ENCODE measurements at regions of chr15 and their contacts with region 1.

Region 1: DNA sequence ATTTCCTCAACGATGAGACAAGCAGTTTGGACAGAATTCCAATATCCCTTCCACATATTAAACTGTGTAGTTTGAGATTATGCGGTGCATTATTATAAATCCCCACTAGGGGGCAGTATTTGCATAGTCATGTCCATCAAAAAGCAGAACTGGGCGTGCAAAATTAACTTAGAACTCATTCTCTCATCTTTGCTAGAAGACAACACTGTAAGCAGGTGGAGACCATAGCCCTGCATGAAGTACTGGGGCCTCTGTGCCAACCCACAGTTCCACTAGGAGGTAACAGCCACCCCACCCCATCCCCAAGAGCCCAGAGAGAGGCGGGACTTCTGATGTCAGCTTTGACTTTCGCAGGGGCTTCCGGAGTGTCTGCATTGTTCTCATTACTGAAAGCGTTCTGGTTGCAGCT is 106.6 kb upstream of the TMC3 start:
- DNase-seq: no peak
- ATAC-seq: peak; percentile 42
- H3K4me3 Mint-ChIP-seq: no peak overlapping the region
- H3K27ac Mint-ChIP-seq: no peak overlapping the region
- H3K4me1 Mint-ChIP-seq: no peaks in the 10 kb centered on the region
- H3K27me3 Mint-ChIP-seq: peaks cover 2% of the 10 kb centered on the region

Region 2: GRCh38 chr15:81939604-81940440 is 459.2 kb after region 1 on chr15:
- CTCF ChIA-PET with region 1: no interaction called
- POLR2A ChIA-PET with region 1: no interaction called
- intact Hi-C with region 1: loop called (anchors 1 kb)
- DNase-seq: peak; percentile 46
- ATAC-seq: peak; percentile 19
- H3K4me3 Mint-ChIP-seq: no peak overlapping the region
- H3K27ac Mint-ChIP-seq: no peak overlapping the region
- H3K4me1 Mint-ChIP-seq: no peaks in the 10 kb centered on the region
- H3K27me3 Mint-ChIP-seq: peaks cover 7% of the 10 kb centered on the region

Region 3: DNA sequence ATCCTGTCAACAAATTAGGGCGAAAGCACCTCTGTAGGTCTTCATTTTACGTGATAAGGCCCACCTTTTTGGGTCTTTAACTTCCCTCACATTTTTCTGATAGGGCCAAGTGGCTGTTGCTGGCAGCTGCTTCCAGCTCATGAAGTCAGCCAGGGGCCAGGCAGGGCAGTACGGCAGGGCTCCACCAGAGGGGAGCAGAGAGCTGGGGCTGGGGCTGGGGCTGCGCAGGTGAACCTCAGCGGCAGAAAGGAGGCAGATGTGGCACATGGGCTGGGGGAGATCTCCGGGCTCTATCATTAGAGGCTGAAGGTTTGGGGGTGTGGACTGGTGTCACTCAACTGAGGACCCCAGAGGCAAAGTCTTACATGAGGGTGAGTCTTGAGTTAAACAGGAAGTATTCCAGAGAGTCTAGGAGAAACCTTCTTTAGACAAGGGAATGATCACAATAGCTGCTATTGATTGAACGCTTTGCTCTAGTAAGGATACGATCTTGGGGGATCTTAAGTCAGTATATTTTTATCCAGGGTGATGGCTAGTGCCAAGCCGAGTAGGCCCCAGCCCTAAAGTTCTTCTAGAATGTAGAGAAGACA is 627.9 kb after region 1 on chr15:
- CTCF ChIA-PET with region 1: no interaction called
- POLR2A ChIA-PET with region 1: no interaction called
- intact Hi-C with region 1: loop called in 1 of 2 experiments (anchors 5 kb)
- DNase-seq: peak; percentile 87
- ATAC-seq: peak; percentile 99
- H3K4me3 Mint-ChIP-seq: no peak overlapping the region
- H3K27ac Mint-ChIP-seq: no peak overlapping the region
- H3K4me1 Mint-ChIP-seq: no peaks in the 10 kb centered on the region
- H3K27me3 Mint-ChIP-seq: no peaks in the 10 kb centered on the region

Region 4: DNA sequence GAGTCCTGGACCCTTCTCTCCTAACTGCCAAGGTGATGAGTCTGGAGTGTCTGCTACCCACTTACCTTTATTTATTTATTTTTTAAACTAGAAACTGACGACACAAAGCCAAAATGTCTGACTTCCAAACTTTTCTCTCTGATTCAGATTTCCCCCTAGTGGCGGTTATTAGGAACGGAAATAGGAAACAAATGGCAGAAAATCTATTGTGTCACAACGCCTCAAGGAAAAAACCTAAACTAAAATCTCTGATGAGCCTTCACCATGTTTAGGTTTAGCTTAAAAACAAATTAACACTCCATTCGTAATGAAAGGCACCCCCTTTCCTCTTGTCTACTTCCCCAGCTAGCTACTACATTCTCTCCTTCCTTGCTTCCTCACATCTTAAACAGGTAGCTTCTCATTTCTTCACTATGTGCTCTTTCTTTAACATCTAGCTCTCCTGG is 659.2 kb after region 1 on chr15:
- CTCF ChIA-PET with region 1: no interaction called
- POLR2A ChIA-PET with region 1: no interaction called
- intact Hi-C with region 1: loop called in 1 of 2 experiments (anchors 2 kb)
- DNase-seq: no peak
- ATAC-seq: no peak
- H3K4me3 Mint-ChIP-seq: no peak overlapping the region
- H3K27ac Mint-ChIP-seq: peak overlapping the region; percentile 7
- H3K4me1 Mint-ChIP-seq: peaks cover 12% of the 10 kb centered on the region
- H3K27me3 Mint-ChIP-seq: no peaks in the 10 kb centered on the region

Region 5: GRCh38 chr15:82197733-82198594 is 717.3 kb after region 1 on chr15:
- CTCF ChIA-PET with region 1: interaction called, 3 read pairs
- POLR2A ChIA-PET with region 1: no interaction called
- intact Hi-C with region 1: loop called (anchors 2 to 5 kb)
- DNase-seq: peak; percentile 75
- ATAC-seq: peak; percentile 80
- H3K4me3 Mint-ChIP-seq: no peak overlapping the region
- H3K27ac Mint-ChIP-seq: no peak overlapping the region
- H3K4me1 Mint-ChIP-seq: no peaks in the 10 kb centered on the region
- H3K27me3 Mint-ChIP-seq: no peaks in the 10 kb centered on the region

Measured in activated CD4-positive, alpha-beta T cell treated with anti-CD3 and anti-CD28 coated beads for 36 hours (primary cell).